ENCODE measurements at regions of chr9 and their contacts with region 1.

Region 1: GRCh38 chr9:35829084-35829763 is at the start of gene TMEM8B:
- DNase-seq: peak; percentile 96
- CTCF ChIP-seq: no peak

Region 2: DNA sequence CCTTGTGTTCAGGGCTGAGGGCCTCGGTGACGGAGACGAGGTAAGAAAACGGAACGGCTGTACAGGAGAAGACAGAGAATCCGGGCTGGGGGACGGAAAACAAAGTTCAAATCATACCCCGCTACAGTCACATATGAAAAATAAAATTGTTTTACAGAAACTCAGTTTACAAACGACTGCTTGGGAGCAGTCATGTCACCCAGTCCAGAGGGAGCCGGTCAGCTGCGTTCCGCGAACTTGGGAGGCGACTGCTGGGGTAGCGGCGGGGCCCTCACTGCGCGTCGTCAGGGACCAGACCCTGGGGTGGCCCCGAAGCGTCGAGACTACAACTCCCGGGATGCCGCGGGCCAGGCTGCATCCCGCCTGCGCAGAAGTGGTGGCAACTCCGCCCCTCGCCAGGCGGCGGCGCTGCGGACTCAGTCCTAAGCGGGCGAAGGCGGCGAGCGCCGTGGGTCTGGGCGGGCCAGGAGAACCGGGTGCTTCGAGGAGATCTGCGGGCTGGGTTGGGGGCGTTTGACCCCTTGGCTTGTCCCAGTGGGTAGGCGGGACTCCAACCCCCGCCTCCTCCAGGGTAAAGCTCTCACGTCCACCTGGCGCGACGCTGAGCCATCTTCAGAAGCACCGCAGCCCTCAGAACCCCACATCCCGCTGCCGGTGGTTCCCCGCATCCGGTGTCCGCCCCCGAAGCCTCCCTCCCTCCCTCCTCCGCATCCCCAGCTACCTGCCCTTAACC is 182.5 kb before region 1 on chr9:
- CTCF ChIA-PET with region 1: interaction called, 13 read pairs
- POLR2A ChIA-PET with region 1: no interaction called
- DNase-seq: peak; percentile 94
- CTCF ChIP-seq: peak; percentile 98

Region 3: DNA sequence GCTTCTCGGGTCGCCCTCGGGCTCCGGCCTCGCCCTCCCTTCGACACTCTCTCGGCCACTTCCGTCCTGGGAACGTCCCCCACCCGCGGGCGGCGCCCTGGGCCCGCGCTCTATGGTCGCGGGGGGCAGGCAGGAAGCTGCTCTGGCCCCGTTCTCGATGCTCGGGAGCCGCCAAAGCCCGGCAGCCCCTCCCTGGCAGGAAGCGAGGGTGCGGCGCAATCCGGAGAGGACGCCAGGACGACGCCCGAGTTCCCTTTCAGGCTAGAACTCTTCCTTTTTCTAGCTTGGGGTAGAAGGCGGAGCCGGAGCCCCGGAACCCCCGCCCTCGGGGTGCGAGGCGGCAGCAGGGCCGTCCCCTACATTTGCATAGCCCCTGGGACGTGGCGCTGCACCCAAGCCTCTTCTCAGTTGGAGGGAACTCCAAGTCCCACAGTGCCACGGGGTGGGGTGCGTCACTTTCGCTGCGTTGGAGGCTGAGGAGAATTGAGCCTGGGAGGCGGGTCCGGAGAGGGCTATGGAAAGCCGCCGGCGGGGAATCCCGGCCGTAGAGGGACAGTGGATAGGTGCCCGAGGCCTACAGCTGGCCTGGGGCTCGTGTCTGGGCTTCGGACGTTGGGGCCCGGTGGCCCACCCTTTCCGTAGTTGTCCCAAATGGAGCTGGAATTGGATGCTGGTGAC is 97.0 kb before region 1 on chr9 and contains the starts of genes CREB3 and TLN1:
- CTCF ChIA-PET with region 1: interaction called, 12 read pairs
- POLR2A ChIA-PET with region 1: interaction called, 3 read pairs
- DNase-seq: peak; percentile 97
- CTCF ChIP-seq: peak; percentile 47

Region 4: GRCh38 chr9:35798658-35799374 is 30.4 kb before region 1 on chr9:
- CTCF ChIA-PET with region 1: interaction called, 14 read pairs
- POLR2A ChIA-PET with region 1: no interaction called
- DNase-seq: no peak
- CTCF ChIP-seq: no peak

Region 5: GRCh38 chr9:35844716-35845270 is 15.6 kb after region 1 on chr9:
- CTCF ChIA-PET with region 1: interaction called, 44 read pairs
- POLR2A ChIA-PET with region 1: interaction called, 4 read pairs
- DNase-seq: no peak
- CTCF ChIP-seq: no peak

Region 6: GRCh38 chr9:35859310-35859989 is 30.2 kb after region 1 on chr9:
- CTCF ChIA-PET with region 1: interaction called, 27 read pairs
- POLR2A ChIA-PET with region 1: interaction called, 3 read pairs
- DNase-seq: no peak
- CTCF ChIP-seq: no peak

Region 7: DNA sequence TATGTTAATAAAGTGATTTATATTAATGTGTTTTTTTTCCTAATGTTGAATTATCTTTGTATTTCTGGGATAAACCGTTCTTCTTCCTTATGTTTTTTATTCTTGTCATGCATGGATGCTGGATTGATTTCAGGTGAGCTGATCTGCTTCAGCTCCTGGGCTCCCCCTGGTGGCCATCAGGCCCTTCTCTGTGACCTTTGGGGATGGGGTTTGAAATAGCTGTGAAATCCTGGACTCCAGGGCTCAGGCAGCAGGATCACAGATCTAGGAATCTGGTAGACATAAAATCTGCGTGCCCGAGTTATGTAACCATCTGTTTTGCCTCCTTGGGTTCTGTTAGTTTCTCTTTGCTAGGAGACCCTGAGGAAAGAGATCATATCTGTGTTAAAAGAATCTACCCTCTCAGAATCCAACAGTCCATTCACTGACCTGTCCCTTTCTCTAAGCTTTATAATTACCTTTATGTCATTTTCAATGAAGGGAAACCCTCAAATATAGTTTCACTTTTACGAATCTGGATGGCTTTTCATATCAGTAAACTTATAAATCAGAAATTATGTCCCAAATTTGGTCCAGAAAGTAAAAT is 53.1 kb after region 1 on chr9:
- CTCF ChIA-PET with region 1: interaction called, 63 read pairs
- POLR2A ChIA-PET with region 1: no interaction called
- DNase-seq: peak; percentile 78
- CTCF ChIP-seq: peak; percentile 97